Activated CD4-positive, alpha-beta T cell treated with anti-CD3 and anti-CD28 coated beads for 36 hours (primary cell): ENCODE measurements at regions of chr17 and their contacts with region 1.

Region 1: DNA sequence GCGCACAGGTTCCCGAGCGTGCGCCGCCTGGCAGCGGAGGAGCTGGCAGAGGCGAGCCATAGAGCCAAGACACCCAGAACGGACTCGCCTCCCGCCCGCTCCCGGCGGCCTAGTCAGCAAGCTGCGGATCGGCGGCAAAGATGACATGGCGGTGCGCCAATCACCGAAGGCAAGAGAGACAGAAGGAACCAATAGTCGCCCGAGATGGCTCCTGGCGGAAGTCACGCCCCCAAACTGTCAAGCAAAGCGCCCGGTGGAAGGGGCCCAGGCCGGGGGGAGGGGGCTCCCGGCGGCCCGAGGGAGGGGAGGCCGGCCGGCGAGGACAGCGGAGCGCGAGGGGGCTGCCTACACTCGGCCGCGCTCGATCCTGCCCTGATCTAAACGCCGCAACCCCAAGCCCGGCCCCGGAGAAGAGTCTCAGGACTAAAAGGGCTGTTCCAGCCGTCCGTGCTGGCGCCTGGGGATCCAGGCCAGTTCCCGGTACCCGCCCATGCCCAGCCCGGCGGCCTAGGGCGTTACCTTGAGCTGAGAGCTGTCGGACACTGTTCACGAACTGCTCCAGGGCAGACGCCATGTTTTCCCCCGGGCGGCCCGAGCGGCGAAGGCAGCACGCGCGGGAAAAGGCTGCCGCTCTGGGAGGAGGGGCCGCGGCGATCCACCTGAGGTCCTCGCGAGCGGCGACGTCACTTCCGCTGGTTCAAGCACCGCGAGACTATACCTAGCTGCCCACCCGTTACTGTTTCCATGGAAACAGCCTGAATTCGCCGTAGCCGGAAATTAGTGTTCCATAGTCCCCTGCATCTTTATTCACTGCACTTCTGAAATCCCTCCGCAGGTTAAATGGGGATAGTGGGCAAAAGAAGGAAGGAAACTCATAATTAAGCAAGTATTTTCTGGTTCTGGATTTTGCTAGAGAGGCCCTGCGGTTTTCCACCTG is at the start of gene COPS3:
- DNase-seq: peak; percentile 99
- ATAC-seq: peak; percentile 94
- H3K4me3 Mint-ChIP-seq: peak within 1 kb of the TSS; percentile 92
- H3K27ac Mint-ChIP-seq: peak within 1 kb of the TSS; percentile 95
- H3K4me1 Mint-ChIP-seq: peaks cover 41% of the 10 kb centered on the region
- H3K27me3 Mint-ChIP-seq: no peaks in the 10 kb centered on the region
- total RNA-seq, gene COPS3: 79.6 to 83.1 TPM

Region 2: DNA sequence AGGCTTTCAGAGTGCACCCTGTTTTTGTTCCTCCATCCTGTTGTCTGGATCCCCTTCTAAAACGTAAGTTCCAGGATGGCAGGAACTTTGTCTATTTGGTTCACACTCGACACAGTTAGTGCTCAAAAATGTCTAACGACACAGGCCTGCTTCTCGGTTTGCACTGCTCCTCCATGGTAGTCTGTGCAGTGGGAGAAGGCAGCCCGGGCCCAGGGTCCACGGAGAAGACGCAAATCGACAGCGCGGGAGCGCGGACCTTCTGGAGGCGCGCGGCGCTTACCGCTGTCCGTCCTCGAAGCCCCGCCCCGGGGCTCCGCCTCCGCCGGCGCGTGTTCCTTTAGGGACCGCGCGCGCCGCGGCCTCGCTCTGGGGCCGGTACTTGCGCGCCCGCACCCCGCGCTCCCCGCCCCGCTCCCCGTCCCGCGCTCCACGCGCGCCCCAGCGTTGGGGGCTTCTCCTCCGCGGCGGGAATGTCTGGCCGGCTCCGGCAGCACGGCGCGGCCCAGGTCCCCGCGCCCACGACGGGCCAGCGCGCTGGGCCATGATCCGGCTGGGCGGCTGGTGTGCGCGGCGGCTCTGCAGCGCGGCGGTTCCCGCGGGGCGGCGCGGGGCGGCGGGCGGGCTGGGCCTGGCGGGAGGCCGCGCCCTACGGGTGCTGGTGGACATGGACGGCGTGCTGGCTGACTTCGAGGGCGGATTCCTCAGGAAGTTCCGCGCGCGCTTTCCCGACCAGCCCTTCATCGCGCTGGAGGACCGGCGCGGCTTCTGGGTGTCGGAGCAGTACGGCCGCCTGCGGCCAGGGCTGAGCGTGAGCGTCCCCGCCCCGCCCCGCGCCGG is 22.3 kb after region 1 on chr17 and contains the start of gene NT5M:
- CTCF ChIA-PET with region 1: interaction called, 3 read pairs
- POLR2A ChIA-PET with region 1: interaction called, 7 read pairs
- intact Hi-C with region 1: loop called (anchors 1 kb)
- DNase-seq: peak; percentile 84
- ATAC-seq: peak; percentile 58
- H3K4me3 Mint-ChIP-seq: peak within 1 kb of the TSS; percentile 71
- H3K27ac Mint-ChIP-seq: peak within 1 kb of the TSS; percentile 87
- H3K4me1 Mint-ChIP-seq: peaks cover 28% of the 10 kb centered on the region
- H3K27me3 Mint-ChIP-seq: no peaks in the 10 kb centered on the region
- total RNA-seq, gene NT5M: 4.3 to 5.4 TPM

Region 3: GRCh38 chr17:17484451-17484899 is 203.6 kb after region 1 on chr17:
- CTCF ChIA-PET with region 1: no interaction called
- POLR2A ChIA-PET with region 1: interaction called, 4 read pairs
- intact Hi-C with region 1: loop called in 1 of 2 experiments (anchors 2 kb)
- DNase-seq: peak; percentile 84
- ATAC-seq: peak; percentile 100
- H3K4me3 Mint-ChIP-seq: no peak overlapping the region
- H3K27ac Mint-ChIP-seq: peak overlapping the region; percentile 68
- H3K4me1 Mint-ChIP-seq: peaks cover 64% of the 10 kb centered on the region
- H3K27me3 Mint-ChIP-seq: no peaks in the 10 kb centered on the region